T-cell (primary cell): ENCODE measurements at regions of chr10 and their contacts with region 1.

Region 1: GRCh38 chr10:124741281-124741921 is 2.8 kb downstream of the FAM53B start:
- DNase-seq: peak; percentile 53 to 88 (median 74)
- ATAC-seq: peak; percentile 52 to 62 (median 54)
- H3K4me3 ChIP-seq: peak overlapping the region; percentile 26 to 79
- H3K4me3 Mint-ChIP-seq: peak overlapping the region; percentile 89 to 99 (median 95)
- H3K27ac ChIP-seq: peak overlapping the region; percentile 83
- H3K27ac Mint-ChIP-seq: peak overlapping the region; percentile 90 to 96
- H3K4me1 ChIP-seq: peaks cover 54 to 68% of the 10 kb centered on the region in 2 experiments
- H3K4me1 Mint-ChIP-seq: peaks cover 73 to 74% (median 74%) of the 10 kb centered on the region in 3 donors
- H3K27me3 ChIP-seq: no peaks in the 10 kb centered on the region
- H3K27me3 Mint-ChIP-seq: no peaks in the 10 kb centered on the region

Region 2: DNA sequence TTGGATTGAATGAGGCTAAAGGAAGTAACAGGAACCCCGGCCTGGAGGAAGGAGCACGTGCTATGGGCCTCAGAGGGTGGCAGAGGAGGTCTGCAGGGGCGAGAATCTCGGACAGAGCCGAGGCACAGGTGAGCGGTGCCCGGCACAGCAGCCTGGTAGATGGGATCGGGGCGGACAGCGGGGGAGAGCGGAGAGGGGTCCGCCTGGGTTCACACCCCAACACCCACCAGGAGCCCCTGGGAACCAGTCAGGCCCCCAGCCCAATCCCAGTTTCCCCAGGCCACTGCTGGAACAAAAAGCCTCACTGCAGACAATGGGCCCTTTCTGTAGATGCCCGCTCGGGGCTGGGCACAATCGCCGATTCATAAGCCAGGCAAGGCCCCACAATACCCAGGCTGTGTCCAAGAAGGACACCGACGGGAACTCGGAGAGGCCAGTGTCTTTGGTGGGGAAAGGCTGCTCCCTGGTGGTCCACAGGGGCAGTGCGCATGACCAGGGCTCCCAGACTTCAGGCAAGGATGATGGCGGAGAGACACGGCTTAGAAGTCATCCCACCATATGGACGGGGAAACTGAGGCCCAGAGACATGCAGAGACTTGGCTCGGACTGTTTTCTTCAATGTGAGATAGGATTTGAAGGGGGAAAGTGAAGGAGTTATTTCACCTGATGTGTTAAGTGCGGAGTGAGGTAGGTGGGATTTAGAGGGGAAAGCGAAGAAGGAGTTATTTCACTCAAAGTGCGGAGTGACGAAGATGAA is 1182.2 kb before region 1 on chr10:
- CTCF ChIA-PET with region 1: no interaction called
- POLR2A ChIA-PET with region 1: no interaction called
- DNase-seq: peak; percentile 16 to 76 (median 53)
- ATAC-seq: peak; percentile 38 to 69 (median 61)
- H3K4me3 ChIP-seq: no peak overlapping the region
- H3K4me3 Mint-ChIP-seq: no peak overlapping the region
- H3K27ac ChIP-seq: no peak overlapping the region
- H3K27ac Mint-ChIP-seq: no peak overlapping the region
- H3K4me1 ChIP-seq: peaks cover 0 to 4% of the 10 kb centered on the region in 2 experiments
- H3K4me1 Mint-ChIP-seq: no peaks in the 10 kb centered on the region
- H3K27me3 ChIP-seq: peaks cover 0 to 49% of the 10 kb centered on the region in 2 experiments
- H3K27me3 Mint-ChIP-seq: peaks cover 22 to 25% of the 10 kb centered on the region in 2 donors

Region 3: GRCh38 chr10:124508070-124508667 is 233.2 kb before region 1 on chr10:
- CTCF ChIA-PET with region 1: no interaction called
- POLR2A ChIA-PET with region 1: no interaction called
- DNase-seq: no peak
- ATAC-seq: no peak
- H3K4me3 ChIP-seq: no peak overlapping the region
- H3K4me3 Mint-ChIP-seq: no peak overlapping the region
- H3K27ac ChIP-seq: no peak overlapping the region
- H3K27ac Mint-ChIP-seq: no peak overlapping the region
- H3K4me1 ChIP-seq: peaks cover 0 to 9% of the 10 kb centered on the region in 2 experiments
- H3K4me1 Mint-ChIP-seq: peaks cover 0 to 5% (median 2%) of the 10 kb centered on the region in 3 donors
- H3K27me3 ChIP-seq: no peaks in the 10 kb centered on the region
- H3K27me3 Mint-ChIP-seq: no peaks in the 10 kb centered on the region

Region 4: DNA sequence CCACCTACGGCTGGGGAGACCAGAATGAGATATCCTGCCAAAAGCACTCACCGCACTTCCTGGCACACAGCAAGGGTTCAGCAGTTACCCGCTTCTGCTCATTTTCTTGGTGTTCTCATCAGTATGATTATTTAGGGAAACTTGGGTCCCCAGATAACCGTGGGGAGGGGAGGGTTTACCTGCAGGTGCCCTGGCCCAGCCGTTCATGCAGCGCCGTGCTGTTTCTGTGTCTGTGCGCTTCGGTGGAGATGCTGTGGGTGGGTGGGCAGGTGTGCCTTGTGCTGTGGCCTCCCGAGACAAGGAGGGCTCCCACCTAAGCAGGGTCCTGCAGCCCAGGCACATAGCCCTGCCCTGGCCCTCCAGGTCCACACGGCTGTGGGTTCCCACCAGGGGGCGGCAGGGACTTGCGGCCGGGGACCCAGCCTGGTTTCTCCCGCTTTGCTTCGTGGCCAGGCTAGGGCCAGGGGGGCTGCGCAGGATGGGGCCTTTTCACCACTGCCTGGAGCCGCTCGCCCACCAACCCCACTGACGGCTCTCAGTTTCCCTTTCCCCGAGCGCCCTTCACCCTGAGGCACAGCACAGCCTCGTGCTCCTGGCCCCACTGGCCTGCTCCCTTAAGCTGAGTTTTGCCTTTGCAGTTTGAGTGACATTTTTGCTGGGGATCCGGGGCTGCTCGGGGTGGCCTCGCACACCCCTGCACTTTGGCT is 201.3 kb before region 1 on chr10:
- CTCF ChIA-PET with region 1: interaction called, 41 to 87 read pairs
- POLR2A ChIA-PET with region 1: no interaction called
- DNase-seq: peak; percentile 27 to 79 (median 63)
- ATAC-seq: peak; percentile 75 to 93 (median 86)
- H3K4me3 ChIP-seq: no peak overlapping the region
- H3K4me3 Mint-ChIP-seq: no peak overlapping the region
- H3K27ac ChIP-seq: no peak overlapping the region
- H3K27ac Mint-ChIP-seq: no peak overlapping the region
- H3K4me1 ChIP-seq: peaks cover 5 to 23% of the 10 kb centered on the region in 2 experiments
- H3K4me1 Mint-ChIP-seq: peaks cover 4 to 15% (median 11%) of the 10 kb centered on the region in 3 donors
- H3K27me3 ChIP-seq: peaks cover 0 to 7% of the 10 kb centered on the region in 2 experiments
- H3K27me3 Mint-ChIP-seq: no peaks in the 10 kb centered on the region

Region 5: DNA sequence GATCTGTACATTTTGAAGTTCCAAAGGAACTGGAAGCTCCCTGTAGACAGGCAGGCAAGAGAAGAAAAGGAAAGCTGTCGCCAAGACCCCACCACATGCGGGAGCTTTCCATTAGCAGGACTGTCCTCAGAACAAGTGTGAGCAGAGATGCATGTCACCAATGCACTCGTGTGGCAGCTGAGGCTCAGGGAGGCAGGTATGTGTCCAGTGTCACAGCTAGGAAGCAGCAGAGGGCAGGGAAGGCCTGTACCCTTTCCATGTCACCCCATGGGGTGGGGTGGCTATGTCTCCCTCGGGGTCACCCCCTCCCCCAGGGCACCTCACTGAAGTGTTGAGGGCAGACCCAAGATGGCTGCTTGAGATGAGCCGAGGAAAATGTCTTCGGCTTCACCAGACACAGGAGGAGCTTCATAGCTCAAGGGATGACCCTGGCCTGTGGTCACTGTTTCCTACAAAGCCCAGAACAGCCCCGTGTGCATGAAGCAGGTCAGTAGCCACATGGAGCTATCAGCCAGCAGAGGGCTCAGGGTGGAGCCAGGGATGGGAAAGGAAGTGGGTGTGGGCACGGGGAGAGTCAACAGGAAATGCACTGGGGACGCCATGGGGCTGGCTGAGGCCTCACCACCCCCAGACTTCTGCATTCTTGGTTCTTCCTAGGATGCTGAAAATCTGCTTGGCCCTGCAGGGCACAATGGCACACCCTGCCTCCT is 93.8 kb before region 1 on chr10:
- CTCF ChIA-PET with region 1: interaction called, 3 to 56 read pairs
- POLR2A ChIA-PET with region 1: interaction called, 3 read pairs
- DNase-seq: peak; percentile 59 to 84 (median 72)
- ATAC-seq: peak; percentile 75 to 84 (median 78)
- H3K4me3 ChIP-seq: peak overlapping the region; percentile 35 to 52
- H3K4me3 Mint-ChIP-seq: peak overlapping the region; percentile 69 to 79 (median 70)
- H3K27ac ChIP-seq: peak overlapping the region; percentile 92
- H3K27ac Mint-ChIP-seq: peak overlapping the region; percentile 98 to 99
- H3K4me1 ChIP-seq: peaks cover 53 to 99% of the 10 kb centered on the region in 2 experiments
- H3K4me1 Mint-ChIP-seq: peaks cover 87 to 99% (median 92%) of the 10 kb centered on the region in 3 donors
- H3K27me3 ChIP-seq: no peaks in the 10 kb centered on the region
- H3K27me3 Mint-ChIP-seq: no peaks in the 10 kb centered on the region

Region 6: DNA sequence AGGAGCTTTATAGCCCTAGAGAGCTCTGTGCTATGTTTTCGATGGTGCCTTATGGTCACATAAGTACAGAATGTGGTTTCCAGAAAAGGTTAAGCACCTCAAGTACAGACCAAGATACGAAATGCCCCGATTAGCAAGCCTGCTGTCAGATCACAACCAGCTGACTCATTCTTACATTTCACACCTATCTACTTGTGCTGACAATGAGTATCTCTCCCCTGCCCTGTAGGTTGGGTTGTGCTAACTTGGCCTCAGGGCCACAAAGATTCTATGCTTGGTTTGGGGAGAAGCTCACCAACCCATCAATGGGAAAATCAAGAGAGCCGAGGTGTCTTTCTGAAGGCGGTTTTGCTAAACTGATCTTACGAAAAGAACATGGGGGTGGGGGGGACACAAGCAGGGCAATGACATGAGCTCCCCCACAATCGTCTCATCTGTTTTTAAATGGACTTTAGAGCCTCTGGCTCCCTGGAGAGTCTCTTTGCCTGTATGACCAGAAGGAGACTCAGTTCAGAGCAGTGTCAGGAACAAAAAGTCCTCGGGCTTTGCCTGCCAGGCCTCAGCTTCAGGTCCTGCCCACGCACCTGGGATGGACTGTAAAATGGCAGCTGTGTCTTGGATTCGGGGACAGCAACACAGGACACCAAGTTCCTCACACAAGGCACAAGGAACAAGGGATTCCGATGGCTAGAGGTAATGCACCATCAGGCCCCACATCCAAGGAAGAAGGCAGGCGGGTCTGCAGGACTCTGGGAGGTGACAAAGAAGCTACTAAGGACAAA is 52.3 kb before region 1 on chr10:
- CTCF ChIA-PET with region 1: interaction called in 1 of 2 experiments, 10 read pairs
- POLR2A ChIA-PET with region 1: interaction called in 1 of 2 experiments, 5 read pairs
- DNase-seq: peak in 28 of 35 experiments; percentile 20 to 80 (median 43)
- ATAC-seq: peak; percentile 79 to 88 (median 80)
- H3K4me3 ChIP-seq: no peak overlapping the region
- H3K4me3 Mint-ChIP-seq: peak overlapping the region in 2 of 3 donors; percentile 34 to 46
- H3K27ac ChIP-seq: peak overlapping the region; percentile 61
- H3K27ac Mint-ChIP-seq: peak overlapping the region; percentile 91 to 93
- H3K4me1 ChIP-seq: peaks cover 16 to 95% of the 10 kb centered on the region in 2 experiments
- H3K4me1 Mint-ChIP-seq: peaks cover 61 to 87% (median 79%) of the 10 kb centered on the region in 3 donors
- H3K27me3 ChIP-seq: no peaks in the 10 kb centered on the region
- H3K27me3 Mint-ChIP-seq: no peaks in the 10 kb centered on the region

Region 7: DNA sequence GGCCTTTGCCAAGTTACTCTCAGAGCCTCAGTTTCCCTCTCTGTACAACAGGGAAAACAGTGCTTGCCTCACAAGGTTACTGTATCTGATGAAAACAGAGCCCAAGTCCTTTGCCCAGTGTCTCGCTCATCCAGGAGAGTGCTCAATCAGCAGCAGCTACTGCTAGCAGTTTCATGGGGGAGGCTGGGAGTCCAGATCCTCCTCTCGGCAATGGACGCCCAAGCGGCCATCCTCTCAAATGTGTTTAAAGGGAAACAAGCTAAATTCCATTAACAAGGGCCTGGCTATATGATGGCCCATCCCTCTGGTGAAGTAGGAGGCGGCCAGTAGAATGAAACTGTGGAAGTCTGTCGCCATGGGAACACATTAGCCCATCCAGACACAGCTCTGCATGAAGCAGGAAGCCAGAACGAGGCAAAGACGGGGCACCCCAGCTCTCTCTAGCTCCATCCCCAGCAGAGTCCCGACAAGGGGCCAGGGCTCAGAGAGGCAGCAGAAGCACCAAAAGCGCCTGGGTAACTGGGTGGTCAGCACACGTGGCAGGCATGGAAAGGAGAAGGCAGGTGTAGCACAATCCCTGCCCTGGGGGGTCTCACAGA is 32.4 kb before region 1 on chr10:
- CTCF ChIA-PET with region 1: interaction called, 3 to 17 read pairs
- POLR2A ChIA-PET with region 1: no interaction called
- DNase-seq: peak in 1 of 35 experiments; percentile 34
- ATAC-seq: peak in 1 of 4 experiments; percentile 46
- H3K4me3 ChIP-seq: no peak overlapping the region
- H3K4me3 Mint-ChIP-seq: peak overlapping the region in 1 of 3 donors; percentile 33
- H3K27ac ChIP-seq: peak overlapping the region; percentile 93
- H3K27ac Mint-ChIP-seq: peak overlapping the region; percentile 99 to 100
- H3K4me1 ChIP-seq: peaks cover 23 to 96% of the 10 kb centered on the region in 2 experiments
- H3K4me1 Mint-ChIP-seq: peaks cover 88 to 93% (median 89%) of the 10 kb centered on the region in 3 donors
- H3K27me3 ChIP-seq: no peaks in the 10 kb centered on the region
- H3K27me3 Mint-ChIP-seq: no peaks in the 10 kb centered on the region

Region 8: GRCh38 chr10:124791378-124792348 is 50.3 kb after region 1 on chr10 and contains the start of gene EEF1AKMT2:
- CTCF ChIA-PET with region 1: interaction called, 6 to 10 read pairs
- POLR2A ChIA-PET with region 1: interaction called in 1 of 2 experiments, 4 read pairs
- DNase-seq: peak; percentile 56 to 87 (median 73)
- ATAC-seq: peak; percentile 96 to 99 (median 98)
- H3K4me3 ChIP-seq: peak within 1 kb of the TSS; percentile 71 to 94
- H3K4me3 Mint-ChIP-seq: peak within 1 kb of the TSS; percentile 95 to 99 (median 98)
- H3K27ac ChIP-seq: peak within 1 kb of the TSS; percentile 74
- H3K27ac Mint-ChIP-seq: peak within 1 kb of the TSS; percentile 97 to 98
- H3K4me1 ChIP-seq: peaks cover 7 to 21% of the 10 kb centered on the region in 2 experiments
- H3K4me1 Mint-ChIP-seq: peaks cover 21 to 25% (median 24%) of the 10 kb centered on the region in 3 donors
- H3K27me3 ChIP-seq: no peaks in the 10 kb centered on the region
- H3K27me3 Mint-ChIP-seq: peaks cover 0 to 2% of the 10 kb centered on the region in 2 donors
- total RNA-seq, gene EEF1AKMT2: 15.8 to 21.0 (median 18.8) TPM